ENCODE measurements at regions of chr10 and their contacts with region 1.

Region 1: GRCh38 chr10:49465736-49466135 is 69.8 kb upstream of the DRGX start:
- DNase-seq: peak in 1 of 2 experiments; percentile 29
- H3K4me3 ChIP-seq: no peak overlapping the region
- H3K4me3 Mint-ChIP-seq: peak overlapping the region; percentile 17
- H3K27ac Mint-ChIP-seq: peak overlapping the region; percentile 60
- H3K4me1 ChIP-seq: peaks cover 18% of the 10 kb centered on the region; the same call in 1 of the 2 replicates
- H3K4me1 Mint-ChIP-seq: peaks cover 23% of the 10 kb centered on the region
- H3K27me3 ChIP-seq: no peaks in the 10 kb centered on the region
- H3K27me3 Mint-ChIP-seq: no peaks in the 10 kb centered on the region
- CTCF ChIP-seq: no peak

Region 2: GRCh38 chr10:49419005-49419404 is 46.7 kb before region 1 on chr10:
- CTCF ChIA-PET with region 1: no interaction called
- POLR2A ChIA-PET with region 1: no interaction called
- intact Hi-C with region 1: loop called (anchors 1 kb)
- DNase-seq: peak; percentile 94 to 96
- H3K4me3 ChIP-seq: no peak overlapping the region
- H3K4me3 Mint-ChIP-seq: peak overlapping the region; percentile 57
- H3K27ac Mint-ChIP-seq: peak overlapping the region; percentile 93
- H3K4me1 ChIP-seq: peaks cover 12% of the 10 kb centered on the region
- H3K4me1 Mint-ChIP-seq: peaks cover 5% of the 10 kb centered on the region
- H3K27me3 ChIP-seq: no peaks in the 10 kb centered on the region
- H3K27me3 Mint-ChIP-seq: no peaks in the 10 kb centered on the region
- CTCF ChIP-seq: peak in 1 of 2 experiments; percentile 48

Region 3: GRCh38 chr10:49499361-49499760 is 33.6 kb after region 1 on chr10:
- CTCF ChIA-PET with region 1: no interaction called
- POLR2A ChIA-PET with region 1: no interaction called
- intact Hi-C with region 1: no loop called
- DNase-seq: no peak
- H3K4me3 ChIP-seq: no peak overlapping the region
- H3K4me3 Mint-ChIP-seq: no peak overlapping the region
- H3K27ac Mint-ChIP-seq: no peak overlapping the region
- H3K4me1 ChIP-seq: no peaks in the 10 kb centered on the region
- H3K4me1 Mint-ChIP-seq: no peaks in the 10 kb centered on the region
- H3K27me3 ChIP-seq: no peaks in the 10 kb centered on the region
- H3K27me3 Mint-ChIP-seq: no peaks in the 10 kb centered on the region
- CTCF ChIP-seq: no peak